Activated CD8-positive, alpha-beta T cell treated with anti-CD3 and anti-CD28 coated beads, Interleukin-2, amount 10 ng/mL, durations not matched to agents 7 days and 5 days (primary cell): ENCODE measurements at regions of chr9 and their contacts with region 1.

Region 1: DNA sequence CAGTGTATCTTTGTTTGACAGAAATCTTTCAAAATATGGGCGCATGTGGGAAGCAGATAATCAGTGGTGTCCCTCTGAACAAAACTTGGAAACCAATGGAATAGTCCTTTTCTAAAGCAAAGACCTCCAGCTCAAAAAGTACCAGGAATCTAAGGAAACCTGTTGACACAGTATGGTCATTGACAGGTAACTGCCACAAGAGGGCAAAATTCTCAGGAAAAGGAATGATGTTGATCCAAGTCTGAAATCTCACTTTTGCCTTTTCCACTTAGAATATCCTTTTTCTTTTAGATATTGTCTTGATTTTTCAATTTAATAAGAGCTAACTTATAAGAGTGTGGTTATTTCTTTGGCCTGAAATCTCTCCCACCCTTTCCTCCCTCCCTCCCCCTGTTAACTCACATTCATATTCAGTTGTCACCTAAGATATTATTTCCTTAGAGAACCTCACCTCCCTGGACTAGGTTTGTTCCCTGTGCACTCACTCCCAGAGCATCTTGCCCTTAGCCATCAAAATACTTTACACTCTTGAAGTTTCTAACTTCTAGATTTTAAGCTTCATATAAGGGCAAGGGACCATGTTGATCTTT is 59.0 kb upstream of the BARX1 start:
- DNase-seq: no peak
- ATAC-seq: no peak
- H3K4me3 Mint-ChIP-seq: no peak overlapping the region
- H3K27ac Mint-ChIP-seq: no peak overlapping the region
- H3K4me1 Mint-ChIP-seq: peaks cover 4% of the 10 kb centered on the region
- H3K27me3 Mint-ChIP-seq: no peaks in the 10 kb centered on the region

Region 2: GRCh38 chr9:93983875-93984274 is 30.3 kb before region 1 on chr9:
- CTCF ChIA-PET with region 1: no interaction called
- POLR2A ChIA-PET with region 1: no interaction called
- DNase-seq: no peak
- ATAC-seq: no peak
- H3K4me3 Mint-ChIP-seq: no peak overlapping the region
- H3K27ac Mint-ChIP-seq: no peak overlapping the region
- H3K4me1 Mint-ChIP-seq: no peaks in the 10 kb centered on the region
- H3K27me3 Mint-ChIP-seq: peaks cover 18% of the 10 kb centered on the region

Region 3: GRCh38 chr9:94002316-94003140 is 11.6 kb before region 1 on chr9:
- CTCF ChIA-PET with region 1: interaction called, 31 read pairs
- POLR2A ChIA-PET with region 1: no interaction called
- DNase-seq: peak; percentile 63
- ATAC-seq: no peak
- H3K4me3 Mint-ChIP-seq: no peak overlapping the region
- H3K27ac Mint-ChIP-seq: no peak overlapping the region
- H3K4me1 Mint-ChIP-seq: no peaks in the 10 kb centered on the region
- H3K27me3 Mint-ChIP-seq: peaks cover 10% of the 10 kb centered on the region

Region 4: DNA sequence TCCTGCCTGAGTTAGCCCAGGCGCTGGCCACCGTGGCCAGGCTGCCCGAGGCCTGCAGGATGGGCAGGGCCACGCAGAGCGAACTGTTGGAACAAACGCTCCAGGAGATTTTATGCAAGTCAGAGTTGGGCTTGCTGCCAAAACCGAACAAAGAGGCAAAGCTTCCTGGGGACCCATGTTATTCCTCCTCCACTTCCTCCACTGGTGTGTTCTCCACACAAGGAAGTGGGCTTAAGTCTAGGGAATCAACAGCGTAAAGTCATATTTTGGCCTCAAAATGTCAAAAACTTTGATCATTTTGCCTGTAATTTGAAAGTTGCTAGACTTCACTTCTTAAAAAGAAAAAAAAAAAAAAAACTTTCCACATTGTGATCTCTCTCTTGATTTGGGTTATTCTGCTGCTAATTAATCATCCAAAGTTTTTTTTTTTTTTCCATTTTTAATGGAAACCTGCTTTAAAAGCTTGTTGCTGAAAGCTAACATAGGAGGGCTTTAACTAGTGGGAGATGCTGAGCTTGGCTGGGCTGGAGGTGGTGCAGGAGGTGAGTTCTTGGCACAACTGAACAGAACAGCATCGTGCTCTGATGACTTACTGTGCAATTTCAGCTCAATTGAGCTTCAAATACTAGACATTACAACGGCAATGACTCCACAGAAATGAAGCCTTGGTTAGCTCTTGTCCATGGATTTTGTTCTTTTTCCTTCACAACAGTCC is 143.0 kb after region 1 on chr9:
- CTCF ChIA-PET with region 1: no interaction called
- POLR2A ChIA-PET with region 1: no interaction called
- DNase-seq: no peak
- ATAC-seq: no peak
- H3K4me3 Mint-ChIP-seq: no peak overlapping the region
- H3K27ac Mint-ChIP-seq: no peak overlapping the region
- H3K4me1 Mint-ChIP-seq: peaks cover 32% of the 10 kb centered on the region
- H3K27me3 Mint-ChIP-seq: no peaks in the 10 kb centered on the region